T-cell (primary cell): ENCODE measurements at regions of chr6 and their contacts with region 1.

Region 1: GRCh38 chr6:18264219-18264922 is at the start of gene DEK:
- DNase-seq: peak; percentile 60 to 87 (median 75)
- ATAC-seq: peak; percentile 71 to 81 (median 76)
- H3K4me3 ChIP-seq: peak within 1 kb of the TSS; percentile 75 to 92
- H3K4me3 Mint-ChIP-seq: peak within 1 kb of the TSS; percentile 94 to 98 (median 95)
- H3K27ac ChIP-seq: peak within 1 kb of the TSS; percentile 95
- H3K27ac Mint-ChIP-seq: peak within 1 kb of the TSS; percentile 96 to 98
- H3K4me1 ChIP-seq: peaks cover 26 to 39% of the 10 kb centered on the region in 2 experiments
- H3K4me1 Mint-ChIP-seq: peaks cover 51 to 55% (median 53%) of the 10 kb centered on the region in 3 donors
- H3K27me3 ChIP-seq: no peaks in the 10 kb centered on the region
- H3K27me3 Mint-ChIP-seq: no peaks in the 10 kb centered on the region
- total RNA-seq, gene DEK: 60.7 to 113 (median 103) TPM

Region 2: GRCh38 chr6:18115356-18115755 is 149.0 kb before region 1 on chr6:
- CTCF ChIA-PET with region 1: no interaction called
- POLR2A ChIA-PET with region 1: interaction called in 1 of 2 experiments, 11 read pairs
- DNase-seq: no peak
- ATAC-seq: no peak
- H3K4me3 ChIP-seq: no peak overlapping the region
- H3K4me3 Mint-ChIP-seq: no peak overlapping the region
- H3K27ac ChIP-seq: no peak overlapping the region
- H3K27ac Mint-ChIP-seq: no peak overlapping the region
- H3K4me1 ChIP-seq: no peaks in the 10 kb centered on the region
- H3K4me1 Mint-ChIP-seq: peaks cover 6 to 11% (median 8%) of the 10 kb centered on the region in 3 donors
- H3K27me3 ChIP-seq: peaks cover 0 to 4% of the 10 kb centered on the region in 2 experiments
- H3K27me3 Mint-ChIP-seq: peaks cover 18 to 27% of the 10 kb centered on the region in 2 donors

Region 3: GRCh38 chr6:18503593-18504231 is 239.3 kb after region 1 on chr6:
- CTCF ChIA-PET with region 1: interaction called, 4 to 10 read pairs
- POLR2A ChIA-PET with region 1: interaction called in 1 of 2 experiments, 3 read pairs
- DNase-seq: peak in 24 of 35 experiments; percentile 1 to 64 (median 11)
- ATAC-seq: peak in 1 of 4 experiments; percentile 43
- H3K4me3 ChIP-seq: no peak overlapping the region
- H3K4me3 Mint-ChIP-seq: no peak overlapping the region
- H3K27ac ChIP-seq: no peak overlapping the region
- H3K27ac Mint-ChIP-seq: no peak overlapping the region
- H3K4me1 ChIP-seq: no peaks in the 10 kb centered on the region
- H3K4me1 Mint-ChIP-seq: peaks cover 0 to 3% (median 0%) of the 10 kb centered on the region in 3 donors
- H3K27me3 ChIP-seq: peaks cover 0 to 5% of the 10 kb centered on the region in 2 experiments
- H3K27me3 Mint-ChIP-seq: peaks cover 0 to 2% of the 10 kb centered on the region in 2 donors